Aorta (tissue), 5 donors: ENCODE measurements at regions of chr12 and their contacts with region 1.

Region 1: GRCh38 chr12:91140026-91140931 is 29.0 kb upstream of the LUM start:
- DNase-seq: peak in 1 of 2 donors; percentile 48
- ATAC-seq: peak; percentile 79
- H3K4me3 ChIP-seq: no peak overlapping the region
- H3K27ac ChIP-seq: no peak overlapping the region
- H3K4me1 ChIP-seq: peaks cover 0 to 6% of the 10 kb centered on the region in 2 donors
- H3K27me3 ChIP-seq: no peaks in the 10 kb centered on the region

Region 2: DNA sequence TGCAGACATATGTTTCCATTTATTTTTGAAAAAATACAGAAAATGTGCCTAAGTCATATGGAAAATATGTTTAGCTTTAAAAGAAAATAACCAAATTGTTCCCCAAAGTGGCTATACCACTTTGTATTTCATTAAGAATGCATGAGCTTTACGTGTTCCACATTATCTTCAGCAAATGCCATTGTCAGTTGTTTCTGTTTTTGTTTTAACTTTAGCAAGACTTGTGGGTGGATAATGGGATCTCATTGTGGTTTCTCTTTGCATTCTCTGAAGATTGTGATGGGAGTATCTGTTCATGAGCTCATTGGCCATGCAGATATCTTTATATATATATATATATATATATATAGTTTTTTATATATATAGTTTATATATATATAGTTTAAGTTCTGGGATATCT is 366.8 kb before region 1 on chr12:
- intact Hi-C with region 1: loop called in 1 of 2 experiments (anchors 5 kb)
- DNase-seq: no peak
- ATAC-seq: no peak
- H3K4me3 ChIP-seq: no peak overlapping the region
- H3K27ac ChIP-seq: no peak overlapping the region
- H3K4me1 ChIP-seq: no peaks in the 10 kb centered on the region
- H3K27me3 ChIP-seq: no peaks in the 10 kb centered on the region

Region 3: DNA sequence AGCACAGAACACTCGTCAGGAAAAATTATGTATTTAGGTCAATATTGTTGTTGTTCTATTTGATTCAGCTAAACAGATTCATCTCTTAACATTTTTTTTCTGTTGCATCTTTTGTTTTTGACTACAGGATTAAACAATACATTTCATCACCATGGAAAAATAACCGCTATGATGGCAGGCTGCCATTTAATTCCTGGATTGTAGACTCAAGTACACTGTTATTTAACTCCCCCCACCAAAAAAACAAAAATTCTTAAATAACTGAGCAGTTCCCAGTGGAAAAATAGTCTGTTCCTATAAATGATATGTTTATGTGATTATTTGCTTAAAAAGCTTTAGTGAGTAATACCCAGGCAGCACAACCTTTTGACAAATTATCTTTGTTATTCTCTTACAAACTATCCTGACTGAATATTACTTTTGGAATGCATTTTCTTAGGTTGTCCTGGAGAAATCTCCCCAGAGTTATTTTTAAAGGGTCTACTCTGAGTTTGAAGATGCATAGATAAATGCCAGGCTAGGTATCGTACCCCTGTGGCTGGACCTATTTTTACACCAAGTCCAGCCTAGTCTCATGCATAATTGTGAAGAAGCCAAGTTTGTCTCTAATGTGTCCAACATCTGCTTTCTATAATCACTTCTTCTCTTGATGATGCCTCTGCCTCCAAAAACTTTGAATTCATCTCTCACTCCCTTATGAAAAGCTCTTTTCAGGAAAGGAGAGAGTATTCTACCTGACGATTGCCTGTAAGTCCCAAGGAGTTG is 86.1 kb before region 1 on chr12:
- intact Hi-C with region 1: no loop called
- DNase-seq: no peak
- ATAC-seq: peak; percentile 62
- H3K4me3 ChIP-seq: no peak overlapping the region
- H3K27ac ChIP-seq: no peak overlapping the region
- H3K4me1 ChIP-seq: no peaks in the 10 kb centered on the region
- H3K27me3 ChIP-seq: no peaks in the 10 kb centered on the region